HAP-1 (cell line): ENCODE measurements at regions of chr22 and their contacts with region 1.

Region 1: GRCh38 chr22:21791635-21792625 is 56.3 kb upstream of the YPEL1 start:
- DNase-seq: no peak
- H3K4me3 ChIP-seq: no peak overlapping the region
- H3K4me1 ChIP-seq: no peaks in the 10 kb centered on the region
- H3K27me3 ChIP-seq: no peaks in the 10 kb centered on the region

Region 2: DNA sequence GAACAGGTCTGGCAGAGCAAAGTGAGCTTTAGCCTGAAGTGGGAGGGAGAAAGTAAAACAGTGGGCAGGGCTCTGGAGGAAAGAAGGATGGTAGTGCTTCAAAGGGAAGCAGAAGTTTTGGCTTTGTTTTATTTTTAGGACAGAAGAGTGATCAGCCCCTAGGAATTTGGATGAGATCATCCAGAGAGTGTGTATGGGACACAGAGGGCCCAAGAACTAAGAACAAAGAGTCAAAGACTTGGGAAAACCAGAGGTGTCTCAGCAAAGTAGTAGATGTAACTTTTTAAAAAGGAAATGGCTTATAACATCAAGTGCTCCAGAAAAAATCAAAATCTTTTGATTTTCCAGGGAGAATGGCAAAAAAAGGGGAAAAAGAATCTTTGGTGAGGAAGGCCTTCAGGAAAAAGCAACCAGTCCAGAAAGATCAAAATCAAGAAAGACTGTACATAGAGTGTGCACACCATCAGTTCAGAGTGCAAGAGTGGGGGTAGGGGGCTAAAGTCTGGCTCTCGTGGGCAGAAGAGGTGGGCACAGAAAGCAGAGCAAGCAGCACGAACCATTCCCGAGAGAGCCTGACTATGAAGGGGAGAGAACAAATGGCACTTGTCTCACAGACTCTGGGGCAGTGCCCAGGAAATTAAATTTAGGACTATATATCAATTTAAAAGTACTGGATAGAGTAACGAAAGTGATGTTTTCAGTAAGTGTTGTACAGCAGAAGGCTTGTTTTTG is 45.5 kb after region 1 on chr22:
- in situ Hi-C with region 1: loop called (anchors 5 kb)
- DNase-seq: no peak
- H3K4me3 ChIP-seq: no peak overlapping the region
- H3K4me1 ChIP-seq: peaks cover 13% of the 10 kb centered on the region
- H3K27me3 ChIP-seq: no peaks in the 10 kb centered on the region

Region 3: GRCh38 chr22:21857481-21857914 is 65.6 kb after region 1 on chr22:
- in situ Hi-C with region 1: no loop called
- DNase-seq: no peak
- H3K4me3 ChIP-seq: no peak overlapping the region
- H3K4me1 ChIP-seq: peaks cover 3% of the 10 kb centered on the region; the same call in 1 of the 2 replicates
- H3K27me3 ChIP-seq: no peaks in the 10 kb centered on the region

Region 4: DNA sequence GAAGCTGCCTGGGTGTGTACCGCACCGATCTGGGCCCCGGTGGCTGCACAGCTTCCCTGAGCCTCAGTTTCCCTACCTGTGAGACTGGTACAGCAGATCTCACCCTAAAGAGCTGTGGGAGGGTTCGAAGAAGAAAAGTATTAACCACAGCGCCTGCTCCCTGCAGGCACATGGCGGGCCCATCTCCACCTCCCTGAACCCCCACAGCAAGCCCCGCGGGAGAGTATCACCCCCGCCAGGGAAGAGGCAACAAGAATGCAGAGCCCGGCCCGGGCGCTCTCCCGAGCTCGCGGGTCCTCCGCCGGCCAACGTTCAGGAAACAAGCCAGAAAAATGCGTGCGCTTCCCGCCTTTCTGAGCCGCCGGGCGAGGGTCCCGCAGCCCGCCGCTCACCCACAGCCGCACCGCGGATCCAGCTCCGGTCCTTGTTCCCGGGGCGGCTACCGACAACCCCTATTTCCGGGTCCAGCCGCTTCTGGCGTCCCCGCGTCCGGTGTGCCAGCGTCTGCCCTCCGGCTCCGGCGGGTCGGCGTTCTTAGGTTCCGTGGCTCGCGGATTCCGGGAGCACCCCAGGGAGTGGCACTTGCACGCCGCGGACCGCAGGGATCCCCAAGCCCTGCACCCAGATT is 190.5 kb after region 1 on chr22 and contains the start of gene TOP3B:
- in situ Hi-C with region 1: no loop called
- DNase-seq: peak; percentile 52 to 89
- H3K4me3 ChIP-seq: peak within 1 kb of the TSS; percentile 94
- H3K4me1 ChIP-seq: peaks cover 7% of the 10 kb centered on the region
- H3K27me3 ChIP-seq: no peaks in the 10 kb centered on the region